Activated naive CD8-positive, alpha-beta T cell treated with anti-CD3 and anti-CD28 coated beads, Interleukin-2, amount 10 ng/mL, durations not matched to agents 7 days and 5 days (primary cell): ENCODE measurements at regions of chr12 and their contacts with region 1.

Region 1: DNA sequence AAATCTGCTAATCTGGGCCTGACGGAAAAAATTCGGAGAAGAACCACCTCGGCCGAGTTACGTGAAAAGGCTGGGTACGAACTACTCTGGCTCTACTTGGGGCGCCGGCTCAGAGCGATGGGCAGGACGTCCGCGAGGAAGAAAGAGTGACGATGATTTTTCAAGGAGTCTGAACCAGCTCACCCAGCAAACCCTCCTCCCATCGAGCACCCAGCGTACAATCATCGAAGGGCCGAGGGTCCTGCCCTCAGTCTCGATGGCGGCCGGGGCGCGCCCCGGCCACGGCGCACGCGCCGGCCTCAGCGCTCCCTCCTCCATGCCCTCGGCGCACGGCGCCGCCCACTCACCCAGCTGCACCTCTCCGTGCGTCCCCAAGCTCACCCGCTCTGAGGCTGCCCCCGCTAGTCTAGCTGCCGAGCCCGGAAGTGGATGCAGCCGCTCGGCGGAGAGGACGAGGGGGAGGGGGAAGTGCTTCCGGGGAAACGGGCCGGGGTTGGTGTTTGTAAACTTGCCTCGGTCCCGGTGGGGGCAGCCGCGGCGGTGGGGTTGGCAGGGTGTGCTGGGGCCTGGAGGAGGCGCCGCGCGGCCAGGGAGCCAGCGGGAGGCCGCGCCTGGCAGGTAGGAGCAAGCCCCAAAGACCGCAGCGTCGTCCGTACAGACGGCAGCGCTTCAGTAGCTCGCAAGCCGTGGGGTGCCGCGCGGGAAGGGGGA is at the starts of genes CSAD and ZNF740:
- DNase-seq: peak; percentile 94
- ATAC-seq: peak; percentile 97
- H3K4me3 Mint-ChIP-seq: peak within 1 kb of the TSS; percentile 86
- H3K27ac Mint-ChIP-seq: peak within 1 kb of the TSS; percentile 93
- H3K4me1 Mint-ChIP-seq: peaks cover 36% of the 10 kb centered on the region
- H3K27me3 Mint-ChIP-seq: no peaks in the 10 kb centered on the region
- total RNA-seq, gene CSAD: 28.1 to 38.3 TPM
- total RNA-seq, gene ZNF740: 53.6 to 60.2 TPM

Region 2: DNA sequence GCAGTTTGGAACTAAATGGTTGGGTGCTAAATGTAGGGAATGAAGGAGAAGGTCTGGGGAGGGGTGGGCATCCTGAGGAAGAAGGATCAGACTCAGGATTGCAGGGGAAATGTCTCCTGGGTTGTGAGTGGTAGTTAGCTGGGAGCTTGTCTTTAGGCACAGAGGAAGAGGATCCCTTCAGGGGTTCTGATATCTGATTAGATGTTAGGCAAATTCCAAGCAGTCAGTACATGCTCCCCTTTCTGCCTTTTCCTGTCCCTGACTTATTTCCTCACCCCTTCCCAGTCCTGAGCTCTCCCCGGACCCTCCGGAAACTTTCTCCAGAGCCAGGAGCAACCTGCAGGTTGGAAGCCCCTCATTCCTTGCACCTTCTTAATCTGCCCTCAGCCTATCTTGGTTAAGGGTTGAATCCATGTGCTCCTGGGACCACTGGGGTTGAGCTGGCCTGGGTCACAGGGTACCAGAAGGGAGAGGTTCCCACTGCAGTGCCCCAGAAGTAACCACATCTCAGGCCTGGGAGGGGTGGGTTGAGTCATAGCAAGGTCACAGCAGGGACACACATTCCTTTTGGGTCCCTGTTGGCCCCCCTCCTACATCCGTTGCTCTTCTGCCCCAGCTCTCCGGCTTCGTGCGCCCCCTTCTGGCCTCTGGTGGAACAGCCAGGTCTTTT is 81.3 kb before region 1 on chr12:
- POLR2A ChIA-PET with region 1: interaction called, 19 read pairs
- DNase-seq: peak; percentile 91
- ATAC-seq: peak; percentile 26
- H3K4me3 Mint-ChIP-seq: peak overlapping the region; percentile 80
- H3K27ac Mint-ChIP-seq: peak overlapping the region; percentile 92
- H3K4me1 Mint-ChIP-seq: peaks cover 62% of the 10 kb centered on the region
- H3K27me3 Mint-ChIP-seq: peaks cover 2% of the 10 kb centered on the region

Region 3: GRCh38 chr12:53159195-53159839 is 21.1 kb before region 1 on chr12:
- POLR2A ChIA-PET with region 1: interaction called, 14 read pairs
- DNase-seq: peak; percentile 90
- ATAC-seq: peak; percentile 98
- H3K4me3 Mint-ChIP-seq: peak overlapping the region; percentile 22
- H3K27ac Mint-ChIP-seq: peak overlapping the region; percentile 51
- H3K4me1 Mint-ChIP-seq: peaks cover 11% of the 10 kb centered on the region
- H3K27me3 Mint-ChIP-seq: no peaks in the 10 kb centered on the region

Region 4: GRCh38 chr12:53200458-53201176 is 20.2 kb after region 1 on chr12:
- POLR2A ChIA-PET with region 1: interaction called, 57 read pairs
- DNase-seq: peak; percentile 40
- ATAC-seq: peak; percentile 46
- H3K4me3 Mint-ChIP-seq: peak overlapping the region; percentile 69
- H3K27ac Mint-ChIP-seq: peak overlapping the region; percentile 80
- H3K4me1 Mint-ChIP-seq: peaks cover 53% of the 10 kb centered on the region
- H3K27me3 Mint-ChIP-seq: no peaks in the 10 kb centered on the region

Region 5: GRCh38 chr12:53205747-53206419 is 25.5 kb after region 1 on chr12:
- POLR2A ChIA-PET with region 1: interaction called, 57 read pairs
- DNase-seq: peak; percentile 77
- ATAC-seq: peak; percentile 69
- H3K4me3 Mint-ChIP-seq: peak overlapping the region; percentile 92
- H3K27ac Mint-ChIP-seq: peak overlapping the region; percentile 92
- H3K4me1 Mint-ChIP-seq: peaks cover 50% of the 10 kb centered on the region
- H3K27me3 Mint-ChIP-seq: no peaks in the 10 kb centered on the region

Region 6: DNA sequence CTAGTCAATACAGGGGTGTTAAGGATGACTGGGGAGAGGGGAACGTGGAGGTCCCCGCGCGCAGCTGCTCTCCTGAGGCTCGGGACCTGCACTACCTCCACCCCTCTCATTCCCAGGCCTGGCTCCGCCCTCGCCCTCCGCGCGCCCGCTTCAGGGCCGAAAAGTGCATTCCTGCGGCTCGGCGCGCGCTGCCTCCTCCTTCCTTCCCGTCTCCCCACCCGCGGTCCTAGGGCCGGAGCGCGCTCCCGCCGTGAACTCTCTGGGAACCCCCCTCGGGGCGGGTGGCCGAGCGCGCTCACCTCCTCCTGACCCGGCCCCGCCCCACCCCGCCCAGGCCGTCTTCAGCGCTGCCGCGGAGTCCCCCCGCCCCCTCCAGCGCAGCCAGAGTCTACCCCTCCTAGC is 40.4 kb after region 1 on chr12:
- POLR2A ChIA-PET with region 1: interaction called, 10 read pairs
- DNase-seq: peak; percentile 87
- ATAC-seq: peak; percentile 62
- H3K4me3 Mint-ChIP-seq: peak overlapping the region; percentile 89
- H3K27ac Mint-ChIP-seq: peak overlapping the region; percentile 96
- H3K4me1 Mint-ChIP-seq: peaks cover 69% of the 10 kb centered on the region
- H3K27me3 Mint-ChIP-seq: no peaks in the 10 kb centered on the region